ENCODE measurements at regions of chr2 and their contacts with region 1.

Region 1: GRCh38 chr2:68236103-68236734 is 16.1 kb downstream of the PPP3R1 start:
- DNase-seq: peak in 1 of 14 experiments; percentile 19
- ATAC-seq: peak; percentile 64
- H3K4me3 ChIP-seq: no peak overlapping the region
- H3K4me3 Mint-ChIP-seq: peak overlapping the region; percentile 5
- H3K27ac ChIP-seq: peak overlapping the region in 1 of 2 donors; percentile 13
- H3K27ac Mint-ChIP-seq: peak overlapping the region; percentile 26
- H3K4me1 ChIP-seq: peaks cover 31% of the 10 kb centered on the region
- H3K4me1 Mint-ChIP-seq: peaks cover 87% of the 10 kb centered on the region
- H3K27me3 ChIP-seq: no peaks in the 10 kb centered on the region
- H3K27me3 Mint-ChIP-seq: no peaks in the 10 kb centered on the region
- CTCF ChIP-seq: no peak

Region 2: GRCh38 chr2:68214381-68214780 is 21.8 kb before region 1 on chr2:
- CTCF ChIA-PET with region 1: interaction called, 3 read pairs
- POLR2A ChIA-PET with region 1: no interaction called
- intact Hi-C with region 1: loop called in 1 of 2 experiments (anchors 1 kb)
- DNase-seq: no peak
- ATAC-seq: no peak
- H3K4me3 ChIP-seq: no peak overlapping the region
- H3K4me3 Mint-ChIP-seq: no peak overlapping the region
- H3K27ac ChIP-seq: no peak overlapping the region
- H3K27ac Mint-ChIP-seq: peak overlapping the region; percentile 71
- H3K4me1 ChIP-seq: peaks cover 12% of the 10 kb centered on the region
- H3K4me1 Mint-ChIP-seq: peaks cover 85% of the 10 kb centered on the region
- H3K27me3 ChIP-seq: no peaks in the 10 kb centered on the region
- H3K27me3 Mint-ChIP-seq: no peaks in the 10 kb centered on the region
- CTCF ChIP-seq: no peak

Region 3: DNA sequence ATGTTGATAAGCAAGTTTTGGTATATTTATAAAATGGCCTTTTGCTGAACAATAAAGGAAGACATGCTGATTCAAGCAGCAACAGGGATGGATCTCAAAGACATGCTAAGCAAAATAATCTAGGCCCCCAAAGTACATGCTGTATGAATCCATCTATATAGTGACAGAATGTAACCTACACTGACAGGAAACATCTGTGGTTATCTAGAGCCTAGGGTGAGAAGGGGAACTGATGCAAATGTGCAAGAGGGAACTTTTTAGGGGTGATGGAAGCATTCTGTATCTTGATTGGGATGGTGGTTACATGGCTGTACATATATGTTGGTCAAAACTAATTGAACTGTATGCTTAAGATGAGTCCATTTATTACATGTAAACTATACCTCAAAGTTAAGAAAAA is 59.3 kb after region 1 on chr2:
- CTCF ChIA-PET with region 1: no interaction called
- POLR2A ChIA-PET with region 1: no interaction called
- intact Hi-C with region 1: no loop called
- DNase-seq: no peak
- ATAC-seq: no peak
- H3K4me3 ChIP-seq: no peak overlapping the region
- H3K4me3 Mint-ChIP-seq: no peak overlapping the region
- H3K27ac ChIP-seq: no peak overlapping the region
- H3K27ac Mint-ChIP-seq: no peak overlapping the region
- H3K4me1 ChIP-seq: no peaks in the 10 kb centered on the region
- H3K4me1 Mint-ChIP-seq: no peaks in the 10 kb centered on the region
- H3K27me3 ChIP-seq: peaks cover 0 to 5% of the 10 kb centered on the region in 2 experiments
- H3K27me3 Mint-ChIP-seq: no peaks in the 10 kb centered on the region
- CTCF ChIP-seq: no peak

Measured in CD4-positive, alpha-beta T cell (primary cell).